ENCODE measurements at regions of chr2 and their contacts with region 1.

Region 1: GRCh38 chr2:127810619-127811396 is at the start of gene WDR33:
- DNase-seq: peak; percentile 97
- ATAC-seq: peak; percentile 99
- H3K4me3 Mint-ChIP-seq: peak within 1 kb of the TSS; percentile 98
- H3K27ac Mint-ChIP-seq: peak within 1 kb of the TSS; percentile 99
- H3K4me1 Mint-ChIP-seq: peaks cover 42% of the 10 kb centered on the region
- H3K27me3 Mint-ChIP-seq: no peaks in the 10 kb centered on the region
- total RNA-seq, gene WDR33: 58.6 to 76.3 TPM

Region 2: DNA sequence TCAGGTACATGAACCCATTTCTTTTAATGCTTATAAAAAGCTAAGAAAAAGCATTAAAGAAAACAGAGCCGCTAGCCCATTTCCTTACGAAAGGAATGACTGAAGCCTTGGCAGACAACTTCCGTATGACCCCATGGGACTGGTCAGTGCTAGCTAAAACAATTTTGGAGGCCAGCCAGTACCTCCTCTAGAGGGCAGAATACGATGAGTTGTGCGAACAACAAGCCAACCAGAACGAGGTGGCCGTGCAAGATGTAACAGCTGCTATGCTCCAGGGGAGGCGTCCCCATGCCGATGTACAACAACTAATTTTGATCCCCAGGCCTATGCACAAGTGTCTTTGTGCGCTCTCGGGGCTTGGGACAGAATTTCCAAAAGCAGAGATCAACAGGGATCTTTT is 439.8 kb before region 1 on chr2:
- CTCF ChIA-PET with region 1: no interaction called
- POLR2A ChIA-PET with region 1: no interaction called
- intact Hi-C with region 1: no loop called
- DNase-seq: no peak
- ATAC-seq: no peak
- H3K4me3 Mint-ChIP-seq: no peak overlapping the region
- H3K27ac Mint-ChIP-seq: no peak overlapping the region
- H3K4me1 Mint-ChIP-seq: peaks cover 18% of the 10 kb centered on the region
- H3K27me3 Mint-ChIP-seq: no peaks in the 10 kb centered on the region

Region 3: DNA sequence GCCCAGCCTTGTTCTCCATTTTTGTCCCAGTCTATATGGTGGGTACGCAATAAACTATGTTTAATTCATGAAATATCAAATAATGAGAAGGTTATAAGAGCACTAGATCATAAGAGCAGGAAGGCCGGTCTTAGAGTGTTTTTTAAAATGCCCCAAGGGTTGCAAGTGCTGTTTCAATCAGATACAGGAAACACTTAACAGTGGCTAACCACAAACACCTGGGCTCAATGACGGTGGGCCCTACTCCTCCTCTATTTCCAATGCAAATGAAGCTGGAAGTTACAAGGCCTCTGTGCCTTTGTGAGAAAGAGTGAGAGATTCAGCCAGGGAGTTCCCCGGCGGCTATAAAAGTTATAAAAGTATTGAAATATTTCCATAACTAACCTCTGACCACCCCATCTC is 19.0 kb after region 1 on chr2:
- CTCF ChIA-PET with region 1: no interaction called
- POLR2A ChIA-PET with region 1: no interaction called
- intact Hi-C with region 1: loop called (anchors 1 to 2 kb)
- DNase-seq: peak; percentile 83
- ATAC-seq: peak; percentile 97
- H3K4me3 Mint-ChIP-seq: no peak overlapping the region
- H3K27ac Mint-ChIP-seq: peak overlapping the region; percentile 78
- H3K4me1 Mint-ChIP-seq: peaks cover 27% of the 10 kb centered on the region
- H3K27me3 Mint-ChIP-seq: no peaks in the 10 kb centered on the region

Region 4: DNA sequence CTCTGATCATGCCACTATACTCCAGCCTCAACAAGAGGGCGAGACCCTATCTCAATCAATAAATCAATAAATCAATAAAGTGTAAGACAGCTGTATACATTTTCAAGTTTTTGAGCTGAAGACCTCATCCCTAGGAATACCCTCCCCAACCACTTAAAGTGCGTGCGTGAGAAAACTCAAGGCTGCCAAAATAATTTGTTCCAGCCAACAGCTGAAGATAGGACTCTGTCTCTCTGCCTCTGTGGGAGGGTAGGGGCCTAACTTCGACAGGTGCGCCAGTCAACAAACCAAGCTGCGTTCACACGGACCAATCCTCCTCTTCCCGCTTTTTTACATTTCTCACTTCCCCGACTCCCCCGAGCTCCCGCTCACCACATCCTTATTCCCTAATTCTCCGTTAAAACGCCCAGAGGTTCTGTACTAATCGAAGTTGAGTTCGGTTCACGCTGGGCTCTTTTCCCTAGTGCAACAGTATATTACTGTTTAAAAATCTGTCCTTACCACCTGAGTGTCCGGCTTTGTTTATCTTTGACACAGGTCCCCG is 46.5 kb after region 1 on chr2:
- CTCF ChIA-PET with region 1: no interaction called
- POLR2A ChIA-PET with region 1: interaction called, 4 read pairs
- intact Hi-C with region 1: loop called (anchors 1 kb)
- DNase-seq: peak; percentile 39
- ATAC-seq: no peak
- H3K4me3 Mint-ChIP-seq: peak overlapping the region; percentile 97
- H3K27ac Mint-ChIP-seq: peak overlapping the region; percentile 96
- H3K4me1 Mint-ChIP-seq: peaks cover 50% of the 10 kb centered on the region
- H3K27me3 Mint-ChIP-seq: no peaks in the 10 kb centered on the region

Region 5: DNA sequence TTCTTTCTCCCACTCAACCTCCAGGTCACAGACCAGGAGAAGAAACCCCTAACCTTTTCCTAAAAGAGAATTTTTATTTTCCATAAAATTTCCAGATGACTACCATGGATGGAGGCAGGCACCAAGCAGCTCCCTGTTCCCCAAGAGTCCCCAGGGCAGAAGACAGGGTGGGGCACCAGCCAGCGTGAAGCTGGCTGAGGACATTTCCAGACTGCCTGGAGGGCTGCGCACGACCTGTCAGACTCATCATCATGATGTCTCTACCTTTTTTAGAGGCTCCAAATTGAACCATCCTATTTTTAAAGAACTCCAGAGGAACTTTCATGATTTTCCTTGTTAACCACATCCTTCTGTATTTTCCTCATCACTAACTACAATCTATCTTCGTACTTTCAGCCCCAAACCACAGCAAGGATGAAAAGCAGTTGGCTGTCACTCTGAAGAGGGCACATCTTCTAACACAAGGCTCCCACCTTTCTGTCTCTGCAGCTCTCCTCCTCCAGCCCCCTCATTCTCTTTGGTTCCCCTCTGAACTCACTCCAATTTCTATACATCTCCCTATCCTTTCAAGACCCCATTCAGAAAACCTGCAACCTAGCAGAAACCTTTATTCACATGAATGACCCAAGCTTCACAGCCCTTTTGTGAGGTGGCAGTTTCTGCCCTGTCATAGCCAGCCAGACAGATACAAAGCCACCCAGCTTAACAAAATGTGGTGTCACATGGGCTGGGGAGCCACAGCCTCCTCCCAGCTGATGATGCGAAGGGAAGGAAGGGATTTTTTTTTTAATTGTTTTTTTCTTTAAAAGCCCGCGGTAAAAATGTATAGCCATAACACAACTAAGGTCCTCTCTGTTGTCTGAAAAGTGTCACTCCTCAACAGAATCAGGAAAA is 63.8 kb after region 1 on chr2:
- CTCF ChIA-PET with region 1: no interaction called
- POLR2A ChIA-PET with region 1: no interaction called
- intact Hi-C with region 1: no loop called
- DNase-seq: peak; percentile 61
- ATAC-seq: peak; percentile 96
- H3K4me3 Mint-ChIP-seq: no peak overlapping the region
- H3K27ac Mint-ChIP-seq: peak overlapping the region; percentile 81
- H3K4me1 Mint-ChIP-seq: peaks cover 34% of the 10 kb centered on the region
- H3K27me3 Mint-ChIP-seq: no peaks in the 10 kb centered on the region

Region 6: DNA sequence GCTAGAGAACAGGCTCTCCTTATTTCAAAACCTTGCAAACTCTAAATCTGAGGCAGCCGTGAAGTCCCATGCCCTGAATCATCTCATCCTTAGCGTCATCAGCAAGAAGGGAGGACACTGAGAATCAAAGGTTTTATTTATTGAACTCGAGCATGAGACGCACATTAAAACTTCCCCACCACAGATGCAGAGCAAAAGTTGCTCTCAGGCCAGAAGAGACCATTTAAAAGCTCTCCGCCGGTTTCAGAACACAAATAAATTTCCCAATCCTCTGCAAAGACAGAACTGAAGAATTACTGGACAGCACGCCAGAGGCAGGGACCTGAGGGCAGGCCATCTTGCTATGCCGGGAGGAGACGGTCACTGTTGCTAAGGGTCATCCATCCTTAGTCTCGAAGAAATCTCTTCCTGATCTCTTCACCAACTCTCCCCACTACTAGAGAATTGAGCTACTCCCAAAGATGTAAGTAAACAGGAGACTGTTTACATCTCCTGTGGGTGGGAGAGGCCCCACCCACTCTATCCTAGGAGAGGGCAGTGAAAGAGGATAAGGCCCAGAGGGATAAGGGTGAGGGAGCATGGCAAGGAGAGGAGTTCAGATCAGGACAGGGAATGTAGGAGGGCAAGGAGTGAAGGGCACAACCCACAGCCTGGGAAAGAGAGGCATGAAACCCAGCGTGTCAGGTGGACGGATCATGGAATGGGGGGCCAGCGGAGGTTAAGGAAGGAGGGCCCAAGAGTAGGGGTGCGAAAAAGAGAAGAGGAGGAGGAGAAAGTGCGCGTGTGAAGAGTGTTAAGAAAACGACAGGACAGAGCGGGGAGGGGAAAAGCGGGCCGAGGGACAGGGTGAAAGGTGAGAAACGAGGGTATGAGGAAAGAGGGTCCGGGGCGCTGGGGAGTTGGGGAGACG is 73.9 kb after region 1 on chr2:
- CTCF ChIA-PET with region 1: no interaction called
- POLR2A ChIA-PET with region 1: no interaction called
- intact Hi-C with region 1: loop called in 1 of 2 experiments (anchors 2 kb)
- DNase-seq: no peak
- ATAC-seq: no peak
- H3K4me3 Mint-ChIP-seq: peak overlapping the region; percentile 88
- H3K27ac Mint-ChIP-seq: peak overlapping the region; percentile 85
- H3K4me1 Mint-ChIP-seq: peaks cover 57% of the 10 kb centered on the region
- H3K27me3 Mint-ChIP-seq: no peaks in the 10 kb centered on the region

Measured in activated CD4-positive, alpha-beta T cell treated with anti-CD3 and anti-CD28 coated beads for 36 hours (primary cell).